ENCODE measurements at regions of chr13 and their contacts with region 1.

Region 1: GRCh38 chr13:40974460-40975407 is 44.4 kb downstream of the ELF1 start:
- DNase-seq: peak; percentile 45
- H3K4me3 Mint-ChIP-seq: peak overlapping the region; percentile 56
- H3K27ac Mint-ChIP-seq: peak overlapping the region; percentile 92
- H3K4me1 Mint-ChIP-seq: peaks cover 87% of the 10 kb centered on the region
- H3K27me3 Mint-ChIP-seq: no peaks in the 10 kb centered on the region

Region 2: GRCh38 chr13:40961214-40961613 is 13.5 kb before region 1 on chr13:
- CTCF ChIA-PET with region 1: interaction called, 10 read pairs
- POLR2A ChIA-PET with region 1: no interaction called
- intact Hi-C with region 1: no loop called
- DNase-seq: no peak
- H3K4me3 Mint-ChIP-seq: no peak overlapping the region
- H3K27ac Mint-ChIP-seq: peak overlapping the region; percentile 71
- H3K4me1 Mint-ChIP-seq: peaks cover 69% of the 10 kb centered on the region
- H3K27me3 Mint-ChIP-seq: no peaks in the 10 kb centered on the region

Region 3: DNA sequence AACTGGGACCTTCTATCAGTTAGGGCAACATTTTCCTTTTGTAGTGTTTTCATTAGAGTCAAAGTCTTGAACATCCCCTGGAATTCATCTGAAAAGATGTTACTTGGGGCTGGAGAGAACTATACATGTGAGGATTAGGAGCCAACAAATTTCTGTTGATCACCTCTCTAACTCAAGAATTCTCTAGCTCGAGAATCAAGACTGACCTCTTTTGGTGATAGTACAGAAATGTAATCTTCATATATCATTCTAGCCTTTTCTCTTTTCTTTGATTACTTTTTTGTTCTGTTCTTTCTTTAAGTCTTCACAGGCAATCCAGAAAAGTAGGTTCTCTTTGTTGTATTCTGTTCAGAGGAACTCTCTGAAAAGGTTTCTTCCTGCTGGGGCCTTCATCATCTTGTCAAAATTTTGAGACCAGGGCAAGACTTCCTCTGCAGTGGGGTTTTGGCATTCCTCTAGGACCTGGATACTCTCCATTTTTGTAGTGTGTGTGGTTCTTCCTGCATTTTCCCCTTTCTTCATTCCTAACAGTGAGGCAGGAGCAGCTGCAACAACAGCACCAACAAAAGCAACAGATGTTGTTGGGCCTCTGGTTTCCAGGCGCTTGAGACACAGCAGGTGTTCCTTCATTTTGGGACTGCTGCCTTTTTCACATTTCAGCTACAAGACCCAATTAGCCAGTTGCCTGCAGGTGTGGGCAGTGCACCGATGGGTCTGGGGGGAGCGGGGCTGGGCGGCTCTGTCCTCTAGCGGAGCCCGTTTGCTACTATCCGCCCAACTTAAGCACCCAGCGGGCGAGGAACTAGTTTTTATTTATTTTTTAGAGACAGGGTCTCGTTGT is 18.2 kb after region 1 on chr13:
- CTCF ChIA-PET with region 1: interaction called, 13 read pairs
- POLR2A ChIA-PET with region 1: interaction called, 4 read pairs
- intact Hi-C with region 1: no loop called
- DNase-seq: no peak
- H3K4me3 Mint-ChIP-seq: no peak overlapping the region
- H3K27ac Mint-ChIP-seq: peak overlapping the region; percentile 75
- H3K4me1 Mint-ChIP-seq: peaks cover 72% of the 10 kb centered on the region
- H3K27me3 Mint-ChIP-seq: no peaks in the 10 kb centered on the region

Region 4: DNA sequence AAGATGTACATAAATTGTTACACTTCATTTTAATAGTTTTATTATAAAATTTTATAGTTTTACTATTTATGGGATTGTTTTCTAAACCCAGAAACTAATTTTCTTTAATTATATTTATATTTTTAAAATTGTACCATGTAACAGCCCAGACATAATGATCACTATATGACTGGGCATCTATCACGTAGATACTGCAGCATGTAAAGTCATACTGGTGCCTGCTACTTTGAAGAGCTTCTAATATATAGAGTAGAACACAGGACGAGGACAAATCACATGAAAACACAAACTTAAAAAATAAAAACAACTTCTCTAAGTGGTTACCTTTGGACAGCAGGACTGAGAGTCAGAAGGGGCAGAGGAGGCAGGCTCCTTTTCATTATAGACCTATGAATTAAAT is 39.1 kb after region 1 on chr13:
- CTCF ChIA-PET with region 1: interaction called, 22 read pairs
- POLR2A ChIA-PET with region 1: interaction called, 87 read pairs
- intact Hi-C with region 1: loop called (anchors 1 kb)
- DNase-seq: no peak
- H3K4me3 Mint-ChIP-seq: peak overlapping the region; percentile 46
- H3K27ac Mint-ChIP-seq: peak overlapping the region; percentile 97
- H3K4me1 Mint-ChIP-seq: peaks cover 51% of the 10 kb centered on the region
- H3K27me3 Mint-ChIP-seq: no peaks in the 10 kb centered on the region

Region 5: GRCh38 chr13:41019011-41019487 is 44.3 kb after region 1 on chr13 and contains the start of gene ELF1:
- CTCF ChIA-PET with region 1: interaction called, 22 read pairs
- POLR2A ChIA-PET with region 1: interaction called, 87 read pairs
- intact Hi-C with region 1: loop called (anchors 1 kb)
- DNase-seq: peak; percentile 67
- H3K4me3 Mint-ChIP-seq: peak within 1 kb of the TSS; percentile 92
- H3K27ac Mint-ChIP-seq: peak within 1 kb of the TSS; percentile 98
- H3K4me1 Mint-ChIP-seq: peaks cover 36% of the 10 kb centered on the region
- H3K27me3 Mint-ChIP-seq: no peaks in the 10 kb centered on the region
- total RNA-seq, gene ELF1: 70.8 to 71.2 TPM

Region 6: GRCh38 chr13:41054212-41054877 is 79.6 kb after region 1 on chr13:
- CTCF ChIA-PET with region 1: interaction called, 17 read pairs
- POLR2A ChIA-PET with region 1: interaction called, 3 read pairs
- intact Hi-C with region 1: no loop called
- DNase-seq: no peak
- H3K4me3 Mint-ChIP-seq: no peak overlapping the region
- H3K27ac Mint-ChIP-seq: no peak overlapping the region
- H3K4me1 Mint-ChIP-seq: peaks cover 56% of the 10 kb centered on the region
- H3K27me3 Mint-ChIP-seq: no peaks in the 10 kb centered on the region

Region 7: DNA sequence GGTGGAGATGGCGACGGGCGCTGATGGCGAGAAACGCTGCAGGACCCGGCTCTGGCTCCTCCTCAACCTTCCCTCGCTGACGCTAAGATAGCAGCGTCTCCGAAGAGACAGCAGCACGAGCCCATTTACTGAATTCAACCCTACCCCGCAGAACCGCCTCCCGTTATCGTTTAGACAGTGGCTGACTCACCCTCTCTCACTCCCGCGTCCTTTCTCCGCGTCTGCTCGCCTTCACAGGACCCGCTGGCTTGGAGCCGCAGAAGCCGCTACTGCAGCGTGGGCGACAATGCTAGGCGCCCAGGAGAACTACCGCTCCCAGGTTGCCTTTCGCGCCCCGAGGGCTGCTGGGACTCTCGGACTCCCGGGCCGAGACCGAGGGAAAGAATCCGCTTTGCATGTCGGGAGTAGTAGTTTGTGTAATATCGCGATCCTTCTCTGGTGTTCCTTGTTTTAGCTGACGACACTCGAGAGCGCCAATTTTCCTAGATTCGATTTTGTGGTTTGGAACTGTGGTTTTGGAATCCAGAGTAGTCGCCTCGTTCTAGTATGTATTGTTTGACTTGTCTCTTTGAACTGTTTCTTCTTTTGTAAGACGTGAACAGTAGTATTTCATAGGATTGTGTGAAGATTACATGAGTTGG is 157.9 kb after region 1 on chr13 and contains the start of gene KBTBD6:
- CTCF ChIA-PET with region 1: no interaction called
- POLR2A ChIA-PET with region 1: no interaction called
- intact Hi-C with region 1: loop called (anchors 1 kb)
- DNase-seq: peak; percentile 98
- H3K4me3 Mint-ChIP-seq: peak within 1 kb of the TSS; percentile 92
- H3K27ac Mint-ChIP-seq: peak within 1 kb of the TSS; percentile 86
- H3K4me1 Mint-ChIP-seq: peaks cover 43% of the 10 kb centered on the region
- H3K27me3 Mint-ChIP-seq: no peaks in the 10 kb centered on the region
- total RNA-seq, gene KBTBD6: 3.6 to 4.2 TPM

Measured in activated CD4-positive, alpha-beta memory T cell treated with anti-CD3 and anti-CD28 coated beads for 36 hours (primary cell).